Activated CD8-positive, alpha-beta T cell treated with anti-CD3 and anti-CD28 coated beads, Interleukin-2, amount 10 ng/mL, durations not matched to agents 7 days and 5 days (primary cell): ENCODE measurements at regions of chr10 and their contacts with region 1.

Region 1: GRCh38 chr10:101889256-101890210 is 45.9 kb upstream of the KCNIP2 start:
- DNase-seq: peak; percentile 82
- ATAC-seq: peak; percentile 58
- H3K4me3 Mint-ChIP-seq: no peak overlapping the region
- H3K27ac Mint-ChIP-seq: no peak overlapping the region
- H3K4me1 Mint-ChIP-seq: no peaks in the 10 kb centered on the region
- H3K27me3 Mint-ChIP-seq: no peaks in the 10 kb centered on the region

Region 2: GRCh38 chr10:101858723-101859500 is 30.6 kb before region 1 on chr10:
- CTCF ChIA-PET with region 1: interaction called, 19 read pairs
- POLR2A ChIA-PET with region 1: no interaction called
- DNase-seq: no peak
- ATAC-seq: peak; percentile 42
- H3K4me3 Mint-ChIP-seq: no peak overlapping the region
- H3K27ac Mint-ChIP-seq: no peak overlapping the region
- H3K4me1 Mint-ChIP-seq: peaks cover 6% of the 10 kb centered on the region
- H3K27me3 Mint-ChIP-seq: no peaks in the 10 kb centered on the region

Region 3: DNA sequence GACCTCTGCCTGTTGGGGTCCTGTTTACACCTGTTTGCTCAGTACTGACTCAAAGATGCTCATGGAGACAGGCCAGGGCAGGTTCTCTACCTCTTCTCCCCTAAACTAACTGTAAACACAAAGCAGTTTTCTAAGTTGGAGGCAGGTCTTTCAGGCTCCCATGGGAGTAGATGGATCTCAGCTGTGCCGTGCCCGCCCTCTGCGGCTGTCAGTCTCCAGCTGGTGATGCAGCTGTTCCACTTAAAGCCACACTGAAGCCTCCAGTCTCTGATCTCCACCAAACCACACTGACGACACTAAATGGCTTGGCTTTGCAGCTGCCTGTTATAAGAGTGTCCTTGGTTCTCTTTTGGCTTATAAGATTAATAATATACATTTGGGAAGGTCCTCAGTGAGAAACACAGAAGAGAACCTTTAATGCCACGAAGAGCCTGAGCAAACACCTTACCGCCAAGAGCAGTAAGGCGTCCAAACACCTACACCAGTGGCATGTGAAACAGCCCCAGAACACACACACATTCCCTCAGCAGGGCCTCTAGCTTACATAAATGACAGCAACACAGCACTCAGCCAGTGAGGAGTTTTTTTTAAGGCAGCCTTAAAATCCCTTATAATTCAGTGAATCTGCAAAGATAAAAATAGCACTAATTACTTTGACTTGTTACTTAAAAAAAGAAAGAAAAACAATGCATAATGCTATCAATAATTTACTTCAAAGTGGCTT is 14.5 kb after region 1 on chr10:
- CTCF ChIA-PET with region 1: interaction called, 32 read pairs
- POLR2A ChIA-PET with region 1: no interaction called
- DNase-seq: peak; percentile 42
- ATAC-seq: peak; percentile 87
- H3K4me3 Mint-ChIP-seq: no peak overlapping the region
- H3K27ac Mint-ChIP-seq: no peak overlapping the region
- H3K4me1 Mint-ChIP-seq: peaks cover 8% of the 10 kb centered on the region
- H3K27me3 Mint-ChIP-seq: no peaks in the 10 kb centered on the region

Region 4: GRCh38 chr10:102167861-102168260 is 278.3 kb after region 1 on chr10:
- CTCF ChIA-PET with region 1: no interaction called
- POLR2A ChIA-PET with region 1: no interaction called
- DNase-seq: no peak
- ATAC-seq: no peak
- H3K4me3 Mint-ChIP-seq: no peak overlapping the region
- H3K27ac Mint-ChIP-seq: no peak overlapping the region
- H3K4me1 Mint-ChIP-seq: peaks cover 12% of the 10 kb centered on the region
- H3K27me3 Mint-ChIP-seq: no peaks in the 10 kb centered on the region